CD8-positive, alpha-beta T cell (primary cell): ENCODE measurements at regions of chr11 and their contacts with region 1.

Region 1: GRCh38 chr11:63042596-63042995 is 27.0 kb upstream of the SLC22A8 start:
- DNase-seq: no peak
- ATAC-seq: no peak
- H3K4me3 ChIP-seq: no peak overlapping the region
- H3K4me3 Mint-ChIP-seq: no peak overlapping the region
- H3K27ac ChIP-seq: no peak overlapping the region
- H3K27ac Mint-ChIP-seq: no peak overlapping the region
- H3K4me1 ChIP-seq: no peaks in the 10 kb centered on the region
- H3K4me1 Mint-ChIP-seq: no peaks in the 10 kb centered on the region
- H3K27me3 ChIP-seq: no peaks in the 10 kb centered on the region
- H3K27me3 Mint-ChIP-seq: peaks cover 18% of the 10 kb centered on the region
- CTCF ChIP-seq: no peak

Region 2: GRCh38 chr11:63212742-63213141 is 170.1 kb after region 1 on chr11:
- CTCF ChIA-PET with region 1: no interaction called
- POLR2A ChIA-PET with region 1: no interaction called
- intact Hi-C with region 1: loop called in 1 of 2 experiments (anchors 5 kb)
- DNase-seq: peak in 2 of 9 experiments; percentile 29 to 44
- ATAC-seq: no peak
- H3K4me3 ChIP-seq: no peak overlapping the region
- H3K4me3 Mint-ChIP-seq: no peak overlapping the region
- H3K27ac ChIP-seq: no peak overlapping the region
- H3K27ac Mint-ChIP-seq: no peak overlapping the region
- H3K4me1 ChIP-seq: no peaks in the 10 kb centered on the region
- H3K4me1 Mint-ChIP-seq: no peaks in the 10 kb centered on the region
- H3K27me3 ChIP-seq: no peaks in the 10 kb centered on the region
- H3K27me3 Mint-ChIP-seq: peaks cover 43% of the 10 kb centered on the region
- CTCF ChIP-seq: peak; percentile 56

Region 3: DNA sequence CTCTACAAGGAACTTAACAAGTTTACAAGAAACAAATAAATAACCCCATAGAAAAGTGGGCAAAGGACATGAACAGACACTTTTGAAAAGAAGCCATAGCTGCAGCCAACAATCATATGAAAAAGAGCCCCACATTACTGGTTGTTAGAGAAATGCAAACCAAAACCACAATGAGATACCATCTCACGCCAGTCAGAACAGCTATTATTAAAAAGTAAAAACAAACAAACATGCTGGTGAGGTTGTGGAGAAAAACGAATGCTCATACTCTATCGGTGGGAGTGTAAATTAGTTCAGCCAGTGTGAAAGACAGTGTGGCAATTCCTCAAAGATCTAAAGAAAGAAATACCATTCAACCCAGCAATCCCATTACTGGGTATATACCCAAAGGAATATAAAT is 206.4 kb after region 1 on chr11:
- CTCF ChIA-PET with region 1: no interaction called
- POLR2A ChIA-PET with region 1: no interaction called
- intact Hi-C with region 1: no loop called
- DNase-seq: no peak
- ATAC-seq: no peak
- H3K4me3 ChIP-seq: no peak overlapping the region
- H3K4me3 Mint-ChIP-seq: no peak overlapping the region
- H3K27ac ChIP-seq: no peak overlapping the region
- H3K27ac Mint-ChIP-seq: no peak overlapping the region
- H3K4me1 ChIP-seq: no peaks in the 10 kb centered on the region
- H3K4me1 Mint-ChIP-seq: no peaks in the 10 kb centered on the region
- H3K27me3 ChIP-seq: no peaks in the 10 kb centered on the region
- H3K27me3 Mint-ChIP-seq: peaks cover 18% of the 10 kb centered on the region
- CTCF ChIP-seq: no peak